ENCODE measurements at regions of chr6 and their contacts with region 1.

Region 1: GRCh38 chr6:112010328-112010727 is 43.6 kb upstream of the CCN6 start:
- DNase-seq: peak; percentile 49
- H3K4me3 Mint-ChIP-seq: no peak overlapping the region
- H3K27ac Mint-ChIP-seq: no peak overlapping the region
- H3K4me1 Mint-ChIP-seq: peaks cover 32% of the 10 kb centered on the region
- H3K27me3 Mint-ChIP-seq: no peaks in the 10 kb centered on the region

Region 2: DNA sequence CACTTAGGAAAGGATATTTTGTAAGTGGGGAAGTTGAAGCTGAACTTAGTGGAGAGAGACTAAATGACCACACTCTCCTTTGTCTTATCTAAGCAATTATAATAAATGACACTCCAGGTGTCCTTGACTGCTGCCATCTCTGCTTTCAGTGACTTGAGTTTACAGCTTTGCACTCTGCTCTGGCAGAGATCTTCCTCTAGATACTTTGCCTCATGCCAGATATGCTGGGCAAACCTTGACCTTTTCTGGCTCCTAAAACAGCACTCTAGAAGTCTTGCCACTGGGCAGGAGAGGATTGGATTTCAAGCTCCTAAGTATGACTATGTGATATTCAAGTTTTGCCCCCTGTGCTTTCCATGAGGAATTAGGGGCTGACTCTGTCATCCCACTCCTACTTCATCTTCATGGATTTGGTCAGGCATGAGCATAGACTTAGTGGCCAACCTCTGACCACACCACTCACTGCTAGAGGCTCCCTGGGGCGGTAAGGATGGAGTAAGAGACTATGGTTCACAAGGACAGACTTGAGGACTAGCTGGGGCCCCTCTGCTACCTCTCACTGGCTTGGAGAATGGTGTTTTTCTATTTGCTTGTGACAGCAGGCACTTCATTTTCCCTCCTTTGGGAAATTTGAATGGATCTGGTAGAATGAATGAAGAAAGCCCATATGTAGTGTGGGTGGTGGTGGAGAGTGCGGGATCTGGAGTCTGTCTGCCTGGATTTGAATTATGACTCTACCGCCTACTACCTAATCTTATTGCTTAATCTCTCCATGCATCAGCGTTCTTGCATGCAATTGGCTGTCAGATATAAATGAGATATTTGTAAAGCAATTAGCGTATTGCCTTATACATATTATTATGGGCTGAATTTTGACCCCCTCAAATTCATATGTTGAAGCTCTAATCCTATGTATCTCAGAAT is 718.7 kb before region 1 on chr6:
- CTCF ChIA-PET with region 1: no interaction called
- POLR2A ChIA-PET with region 1: no interaction called
- intact Hi-C with region 1: no loop called
- DNase-seq: no peak
- H3K4me3 Mint-ChIP-seq: no peak overlapping the region
- H3K27ac Mint-ChIP-seq: no peak overlapping the region
- H3K4me1 Mint-ChIP-seq: peaks cover 30% of the 10 kb centered on the region
- H3K27me3 Mint-ChIP-seq: no peaks in the 10 kb centered on the region

Region 3: GRCh38 chr6:111861431-111861885 is 148.9 kb before region 1 on chr6:
- CTCF ChIA-PET with region 1: no interaction called
- POLR2A ChIA-PET with region 1: no interaction called
- intact Hi-C with region 1: no loop called
- DNase-seq: peak; percentile 48
- H3K4me3 Mint-ChIP-seq: peak overlapping the region; percentile 2
- H3K27ac Mint-ChIP-seq: peak overlapping the region; percentile 52
- H3K4me1 Mint-ChIP-seq: peaks cover 100% of the 10 kb centered on the region
- H3K27me3 Mint-ChIP-seq: no peaks in the 10 kb centered on the region

Region 4: GRCh38 chr6:112029045-112029822 is 18.9 kb after region 1 on chr6:
- CTCF ChIA-PET with region 1: interaction called, 193 read pairs
- POLR2A ChIA-PET with region 1: no interaction called
- intact Hi-C with region 1: no loop called
- DNase-seq: peak; percentile 86
- H3K4me3 Mint-ChIP-seq: no peak overlapping the region
- H3K27ac Mint-ChIP-seq: peak overlapping the region; percentile 89
- H3K4me1 Mint-ChIP-seq: peaks cover 70% of the 10 kb centered on the region
- H3K27me3 Mint-ChIP-seq: no peaks in the 10 kb centered on the region

Region 5: DNA sequence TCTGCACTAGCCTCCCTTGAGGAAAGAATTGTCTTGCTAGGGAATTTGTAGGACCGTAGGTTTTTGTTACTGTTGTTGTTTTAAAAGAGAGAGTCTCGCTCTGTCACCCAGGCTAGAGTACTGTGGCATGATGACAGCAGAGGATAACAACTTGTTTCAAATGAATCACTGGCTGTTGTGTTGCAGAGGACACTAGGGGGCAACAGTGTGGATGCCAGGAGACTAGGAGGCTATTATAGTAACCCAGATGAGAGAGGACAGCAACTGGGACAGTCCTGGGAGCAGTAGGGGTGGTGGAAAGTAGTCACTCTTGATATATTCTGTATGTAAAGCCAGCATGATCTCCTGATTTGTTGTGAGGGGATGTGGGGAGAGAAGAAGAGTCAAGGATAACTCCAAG is 285.8 kb after region 1 on chr6:
- CTCF ChIA-PET with region 1: no interaction called
- POLR2A ChIA-PET with region 1: no interaction called
- intact Hi-C with region 1: no loop called
- DNase-seq: no peak
- H3K4me3 Mint-ChIP-seq: no peak overlapping the region
- H3K27ac Mint-ChIP-seq: no peak overlapping the region
- H3K4me1 Mint-ChIP-seq: no peaks in the 10 kb centered on the region
- H3K27me3 Mint-ChIP-seq: peaks cover 21% of the 10 kb centered on the region

Measured in activated CD4-positive, alpha-beta memory T cell treated with anti-CD3 and anti-CD28 coated beads for 36 hours (primary cell).